ENCODE measurements at regions of chrX and their contacts with region 1.

Region 1: GRCh38 chrX:70454441-70455365 is 10.1 kb downstream of the DLG3 start:
- DNase-seq: no peak
- ATAC-seq: peak; percentile 84
- H3K4me3 ChIP-seq: peak overlapping the region; percentile 61
- H3K27ac ChIP-seq: 0 out of 2 replicates have a peak overlapping the region, but pooled peaks have one; percentile 25
- H3K4me1 ChIP-seq: peaks cover 12% of the 10 kb centered on the region
- H3K27me3 ChIP-seq: no peaks in the 10 kb centered on the region
- CTCF ChIP-seq: peak; percentile 78 to 91 (median 80)
- EP300 ChIP-seq: no peak
- POLR2A ChIP-seq: peak; percentile 23; the same call in 1 of the 2 replicates
- RAD21 ChIP-seq: peak; percentile 71

Region 2: DNA sequence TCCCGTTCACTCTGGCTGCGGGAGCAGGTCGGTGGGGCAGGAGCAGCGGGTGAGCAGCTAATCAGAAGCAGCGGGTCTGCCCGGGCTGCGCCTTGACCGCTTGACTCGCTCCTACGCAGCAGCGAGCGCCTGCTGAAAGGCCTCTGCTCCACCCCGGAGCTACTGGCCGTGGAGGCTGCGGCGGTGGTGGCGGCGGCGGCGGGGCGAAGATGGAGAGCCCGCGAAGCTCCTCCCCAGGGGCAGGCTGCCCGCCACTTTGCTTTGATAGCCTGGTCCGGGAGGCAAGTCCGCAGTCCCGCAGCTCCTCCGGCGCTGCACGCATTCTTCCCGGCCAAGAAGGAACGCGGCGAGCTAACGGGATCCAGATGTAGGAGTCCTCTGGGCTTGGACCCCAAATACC is 1326.1 kb before region 1 on chrX:
- CTCF ChIA-PET with region 1: no interaction called
- POLR2A ChIA-PET with region 1: no interaction called
- RAD21 ChIA-PET with region 1: no interaction called
- SMC1A ChIA-PET with region 1: no interaction called
- in situ Hi-C with region 1: no loop called
- intact Hi-C with region 1: no loop called
- DNase-seq: no peak
- ATAC-seq: no peak
- H3K4me3 ChIP-seq: no peak overlapping the region
- H3K27ac ChIP-seq: no peak overlapping the region
- H3K4me1 ChIP-seq: no peaks in the 10 kb centered on the region
- H3K27me3 ChIP-seq: peaks cover 0 to 2% of the 10 kb centered on the region in 2 experiments; a peak in 2 of 4 replicates
- CTCF ChIP-seq: no peak
- EP300 ChIP-seq: no peak
- POLR2A ChIP-seq: no peak
- RAD21 ChIP-seq: no peak

Region 3: GRCh38 chrX:70433848-70434351 is 20.8 kb before region 1 on chrX:
- CTCF ChIA-PET with region 1: interaction called, 11 read pairs
- POLR2A ChIA-PET with region 1: no interaction called
- RAD21 ChIA-PET with region 1: interaction called, 4 read pairs
- SMC1A ChIA-PET with region 1: interaction called, 3 read pairs
- in situ Hi-C with region 1: no loop called
- intact Hi-C with region 1: no loop called
- DNase-seq: no peak
- ATAC-seq: peak; percentile 81
- H3K4me3 ChIP-seq: peak overlapping the region; percentile 75
- H3K27ac ChIP-seq: peak overlapping the region; percentile 50; the same call in 1 of the 2 replicates
- H3K4me1 ChIP-seq: peaks cover 10% of the 10 kb centered on the region
- H3K27me3 ChIP-seq: no peaks in the 10 kb centered on the region
- CTCF ChIP-seq: peak; percentile 63 to 71 (median 69)
- EP300 ChIP-seq: no peak
- POLR2A ChIP-seq: 0 out of 2 replicates have a peak, but pooled peaks have one; percentile 43
- RAD21 ChIP-seq: peak; percentile 48

Region 4: DNA sequence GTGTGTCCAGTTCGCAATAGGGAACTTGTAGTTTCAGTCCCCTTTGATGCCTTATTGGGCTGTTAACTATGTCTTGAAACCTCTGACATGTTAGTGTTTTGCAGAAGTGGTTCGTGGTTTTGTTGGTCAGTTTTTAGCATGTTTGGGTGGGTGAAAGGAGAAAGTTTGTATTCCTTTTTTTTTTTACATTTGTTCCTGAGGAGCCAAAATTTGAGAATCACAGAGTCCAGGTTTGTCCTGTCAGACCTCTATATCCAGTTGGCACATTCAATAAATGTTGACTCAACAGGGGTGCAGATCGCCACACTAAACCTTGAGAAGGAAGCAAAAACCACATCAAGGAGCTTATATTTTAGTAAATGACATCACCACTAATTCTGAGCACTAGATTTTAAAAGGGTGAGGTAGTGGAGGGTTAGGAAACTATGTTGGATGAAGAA is 16.2 kb after region 1 on chrX:
- CTCF ChIA-PET with region 1: interaction called, 3 read pairs
- POLR2A ChIA-PET with region 1: interaction called, 4 read pairs
- RAD21 ChIA-PET with region 1: interaction called, 3 read pairs
- SMC1A ChIA-PET with region 1: no interaction called
- in situ Hi-C with region 1: no loop called
- intact Hi-C with region 1: loop called (anchors 2 kb)
- DNase-seq: no peak
- ATAC-seq: peak; percentile 94
- H3K4me3 ChIP-seq: no peak overlapping the region
- H3K27ac ChIP-seq: no peak overlapping the region
- H3K4me1 ChIP-seq: no peaks in the 10 kb centered on the region
- H3K27me3 ChIP-seq: no peaks in the 10 kb centered on the region
- CTCF ChIP-seq: no peak
- EP300 ChIP-seq: peak in 1 of 2 experiments; percentile 27; a peak in 1 of 4 replicates
- POLR2A ChIP-seq: no peak
- RAD21 ChIP-seq: no peak

Region 5: DNA sequence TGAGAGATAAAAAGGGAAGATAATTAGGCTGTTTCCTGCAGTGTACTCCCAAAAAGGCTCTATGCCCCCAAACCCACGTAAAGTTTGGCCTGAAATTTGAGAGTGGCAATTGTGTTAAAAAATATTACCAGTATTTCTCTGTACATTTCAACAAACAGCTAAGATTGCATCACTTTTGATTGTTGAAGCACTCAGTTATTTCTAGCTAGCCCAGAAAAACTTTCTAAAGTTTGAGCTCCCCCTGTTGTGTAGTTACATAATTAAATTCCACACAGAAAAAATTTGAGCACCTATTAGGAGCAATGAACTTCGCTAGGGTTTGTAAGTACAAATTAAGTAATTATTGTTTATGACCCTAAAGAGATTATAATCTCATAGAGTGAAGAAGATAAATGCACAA is 99.4 kb after region 1 on chrX:
- CTCF ChIA-PET with region 1: interaction called, 10 read pairs
- POLR2A ChIA-PET with region 1: no interaction called
- RAD21 ChIA-PET with region 1: interaction called, 3 read pairs
- SMC1A ChIA-PET with region 1: interaction called, 5 read pairs
- in situ Hi-C with region 1: no loop called
- intact Hi-C with region 1: loop called (anchors 2 kb)
- DNase-seq: no peak
- ATAC-seq: peak; percentile 63
- H3K4me3 ChIP-seq: no peak overlapping the region
- H3K27ac ChIP-seq: no peak overlapping the region
- H3K4me1 ChIP-seq: no peaks in the 10 kb centered on the region
- H3K27me3 ChIP-seq: no peaks in the 10 kb centered on the region
- CTCF ChIP-seq: peak in 1 of 3 experiments; percentile 30; a peak in 1 of 6 replicates
- EP300 ChIP-seq: no peak
- POLR2A ChIP-seq: no peak
- RAD21 ChIP-seq: 0 out of 2 replicates have a peak, but pooled peaks have one; percentile 34

Region 6: DNA sequence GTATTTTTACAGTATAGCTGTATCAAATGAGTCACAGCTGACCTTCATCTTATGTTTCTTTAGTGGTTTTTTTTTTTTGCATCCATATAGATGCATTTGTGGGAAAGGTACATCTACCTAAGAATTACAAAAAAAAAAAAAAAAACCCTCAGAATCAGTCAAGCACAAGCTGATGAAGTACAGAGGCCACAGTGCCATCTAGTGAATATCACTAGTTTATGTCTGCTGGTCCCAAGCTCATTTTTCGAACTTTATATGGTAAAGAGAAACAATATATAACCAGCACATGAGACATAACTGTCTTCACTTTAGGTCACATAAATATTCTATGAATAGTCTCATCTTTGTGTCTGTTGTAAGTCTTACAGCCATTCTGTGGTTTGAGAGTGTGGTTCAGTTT is 210.0 kb after region 1 on chrX:
- CTCF ChIA-PET with region 1: interaction called, 12 read pairs
- POLR2A ChIA-PET with region 1: no interaction called
- RAD21 ChIA-PET with region 1: interaction called, 6 read pairs
- SMC1A ChIA-PET with region 1: interaction called, 3 read pairs
- in situ Hi-C with region 1: loop called (anchors 10 kb)
- intact Hi-C with region 1: loop called (anchors 1 kb)
- DNase-seq: no peak
- ATAC-seq: peak; percentile 60
- H3K4me3 ChIP-seq: no peak overlapping the region
- H3K27ac ChIP-seq: no peak overlapping the region
- H3K4me1 ChIP-seq: no peaks in the 10 kb centered on the region
- H3K27me3 ChIP-seq: no peaks in the 10 kb centered on the region
- CTCF ChIP-seq: peak; percentile 18 to 41 (median 33); a peak in 4 of 6 replicates
- EP300 ChIP-seq: no peak
- POLR2A ChIP-seq: no peak
- RAD21 ChIP-seq: peak; percentile 48